ENCODE measurements at regions of chr17 and their contacts with region 1.

Region 1: GRCh38 chr17:38485146-38485468 is 56.8 kb downstream of the ARHGAP23 start:
- DNase-seq: no peak
- H3K4me3 ChIP-seq: no peak overlapping the region
- H3K27ac ChIP-seq: peak overlapping the region; percentile 15 to 89 (median 70)
- H3K4me1 ChIP-seq: peaks cover 0 to 38% (median 21%) of the 10 kb centered on the region in 4 donors
- H3K27me3 ChIP-seq: no peaks in the 10 kb centered on the region
- CTCF ChIP-seq: no peak
- EP300 ChIP-seq: no peak
- POLR2A ChIP-seq: no peak

Region 2: GRCh38 chr17:38444151-38444550 is 41.0 kb before region 1 on chr17:
- intact Hi-C with region 1: loop called (anchors 2 kb)
- DNase-seq: peak; percentile 87
- H3K4me3 ChIP-seq: peak overlapping the region in 1 of 4 donors; percentile 5
- H3K27ac ChIP-seq: peak overlapping the region; percentile 71 to 84 (median 76)
- H3K4me1 ChIP-seq: peaks cover 0 to 70% (median 61%) of the 10 kb centered on the region in 4 donors
- H3K27me3 ChIP-seq: no peaks in the 10 kb centered on the region
- CTCF ChIP-seq: peak; percentile 81 to 93 (median 90)
- EP300 ChIP-seq: no peak
- POLR2A ChIP-seq: no peak